ENCODE measurements at regions of chr17 and their contacts with region 1.

Region 1: GRCh38 chr17:43907425-43907981 is at the start of gene MPP2:
- DNase-seq: peak; percentile 26
- H3K4me3 ChIP-seq: peak within 1 kb of the TSS; percentile 68
- H3K27ac ChIP-seq: peak within 1 kb of the TSS; percentile 21
- H3K27me3 ChIP-seq: peaks cover 42% of the 10 kb centered on the region
- CTCF ChIP-seq: peak; percentile 30
- polyA plus RNA-seq, gene MPP2: 2.4 and 2.5 TPM in 2 replicates

Region 2: GRCh38 chr17:43924558-43924957 is 17.1 kb after region 1 on chr17:
- CTCF ChIA-PET with region 1: interaction called, 15 read pairs
- POLR2A ChIA-PET with region 1: no interaction called
- DNase-seq: no peak
- H3K4me3 ChIP-seq: no peak overlapping the region
- H3K27ac ChIP-seq: no peak overlapping the region
- H3K27me3 ChIP-seq: peaks cover 65% of the 10 kb centered on the region
- CTCF ChIP-seq: no peak

Region 3: GRCh38 chr17:43958953-43959352 is 51.5 kb after region 1 on chr17:
- CTCF ChIA-PET with region 1: no interaction called
- POLR2A ChIA-PET with region 1: no interaction called
- DNase-seq: no peak
- H3K4me3 ChIP-seq: no peak overlapping the region
- H3K27ac ChIP-seq: no peak overlapping the region
- H3K27me3 ChIP-seq: peaks cover 40% of the 10 kb centered on the region
- CTCF ChIP-seq: no peak